ENCODE measurements at regions of chr9 and their contacts with region 1.

Region 1: DNA sequence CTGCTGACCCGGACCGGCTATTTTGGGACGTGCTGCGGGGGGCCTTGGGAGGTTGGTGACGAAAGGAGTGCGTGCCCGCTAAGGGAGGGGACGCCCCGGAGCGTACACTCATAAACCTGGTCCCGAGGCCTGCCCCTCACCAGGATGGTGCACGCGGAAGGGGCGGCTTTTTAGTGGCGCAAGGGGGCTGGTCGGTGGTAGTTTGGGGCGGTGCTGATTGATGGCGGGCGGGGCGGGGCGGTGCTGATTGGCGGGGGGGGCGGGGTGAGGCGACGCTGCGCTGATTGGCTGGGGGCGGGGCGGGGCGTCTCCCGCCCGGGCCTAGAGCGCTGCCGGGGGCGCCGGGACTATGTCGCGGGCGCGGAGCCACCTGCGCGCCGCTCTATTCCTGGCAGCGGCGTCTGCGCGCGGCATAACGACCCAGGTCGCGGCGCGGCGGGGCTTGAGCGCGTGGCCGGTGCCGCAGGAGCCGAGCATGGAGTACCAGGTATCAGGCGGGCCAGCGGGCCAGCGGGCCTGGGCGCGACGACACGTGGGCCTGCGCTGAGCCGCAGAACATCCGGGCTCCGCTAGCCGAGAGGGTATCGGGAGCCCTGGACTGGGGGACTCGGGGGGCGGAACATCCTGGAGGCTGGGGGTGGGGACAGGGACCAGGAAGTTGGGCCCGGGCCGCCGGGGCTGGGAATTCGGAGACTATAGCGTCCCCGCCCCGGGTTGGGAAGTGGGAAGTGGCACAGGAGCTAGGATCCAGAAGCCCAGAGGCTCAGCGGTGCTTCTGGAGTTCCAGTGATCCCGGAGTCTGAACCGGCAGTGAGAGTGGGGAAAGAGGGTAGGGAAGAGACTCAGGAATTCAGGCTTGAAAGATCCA is at the start of gene FPGS:
- DNase-seq: peak; percentile 90
- H3K4me3 ChIP-seq: peak within 1 kb of the TSS; percentile 53
- H3K27ac ChIP-seq: peak within 1 kb of the TSS; percentile 87
- H3K4me1 ChIP-seq: peaks cover 10% of the 10 kb centered on the region
- H3K27me3 ChIP-seq: no peaks in the 10 kb centered on the region
- CTCF ChIP-seq: no peak
- total RNA-seq, gene FPGS: 31.6 to 55.1 TPM

Region 2: DNA sequence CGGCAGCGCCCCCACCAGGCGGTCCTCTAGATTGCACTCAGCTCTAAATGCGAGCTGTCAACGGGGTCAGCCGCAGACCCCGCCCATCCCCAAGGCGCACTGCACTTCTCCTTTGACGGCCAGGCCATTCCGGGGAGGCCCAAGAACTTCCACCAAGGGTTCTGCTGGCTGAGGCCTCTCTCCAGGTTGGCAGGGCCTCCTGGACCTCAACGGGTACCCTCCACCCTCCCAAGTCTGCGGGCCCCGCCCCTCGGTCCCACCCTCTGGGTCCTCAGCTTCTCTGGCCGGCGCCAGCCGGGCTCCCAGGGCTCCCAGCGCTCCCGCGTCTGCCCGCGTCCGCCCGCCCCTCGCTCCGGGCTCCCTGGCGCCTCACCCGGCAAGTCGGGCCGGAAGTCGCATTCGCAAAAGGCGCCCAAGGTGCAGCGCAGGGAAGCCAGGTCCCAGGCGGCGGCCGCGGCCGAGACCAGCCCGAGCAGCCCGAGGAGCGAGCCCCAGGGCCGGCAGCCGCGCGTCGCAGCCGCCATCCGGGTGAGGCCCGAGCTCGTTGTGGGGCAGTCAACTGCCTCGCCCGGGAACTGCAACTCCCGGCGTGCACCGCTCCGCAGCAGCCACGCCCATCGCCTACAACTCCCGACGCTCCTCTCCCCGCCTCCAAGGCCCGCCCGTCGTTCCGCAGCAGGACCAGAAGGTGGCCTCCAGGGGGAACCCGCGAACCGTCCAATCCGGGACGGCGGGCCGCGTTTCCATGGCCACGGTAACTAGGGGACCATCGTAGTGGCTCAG is 67.9 kb before region 1 on chr9 and contains the start of gene TOR2A:
- intact Hi-C with region 1: no loop called
- DNase-seq: peak; percentile 98
- H3K4me3 ChIP-seq: peak within 1 kb of the TSS; percentile 88
- H3K27ac ChIP-seq: peak within 1 kb of the TSS; percentile 97
- H3K4me1 ChIP-seq: peaks cover 7% of the 10 kb centered on the region
- H3K27me3 ChIP-seq: no peaks in the 10 kb centered on the region
- CTCF ChIP-seq: peak; percentile 94
- total RNA-seq, gene TOR2A: 25.8 to 29.8 TPM

Region 3: GRCh38 chr9:127869310-127870152 is 66.7 kb after region 1 on chr9:
- intact Hi-C with region 1: loop called (anchors 10 kb)
- DNase-seq: peak; percentile 94
- H3K4me3 ChIP-seq: no peak overlapping the region
- H3K27ac ChIP-seq: no peak overlapping the region
- H3K4me1 ChIP-seq: peaks cover 7% of the 10 kb centered on the region
- H3K27me3 ChIP-seq: no peaks in the 10 kb centered on the region
- CTCF ChIP-seq: peak; percentile 81

Region 4: DNA sequence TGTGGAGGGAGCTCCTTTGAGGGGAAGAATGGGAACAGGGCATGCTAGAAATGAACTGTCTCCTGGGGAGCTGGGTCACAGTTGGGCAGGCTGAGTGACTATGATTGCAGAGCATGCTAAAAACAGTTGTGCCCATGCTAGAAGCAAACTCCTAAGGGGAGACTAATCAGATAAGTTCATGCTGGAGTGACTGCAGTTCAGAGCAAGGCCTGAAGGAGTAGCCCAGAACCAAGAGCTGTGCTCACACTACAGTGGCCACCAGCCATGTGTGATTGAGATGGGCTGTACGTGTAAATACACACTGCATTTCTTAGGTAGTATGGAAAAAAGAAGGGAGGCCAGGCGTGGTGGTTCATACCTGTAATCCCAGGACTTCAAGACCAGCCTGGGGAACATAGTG is 85.0 kb after region 1 on chr9:
- intact Hi-C with region 1: no loop called
- DNase-seq: no peak
- H3K4me3 ChIP-seq: no peak overlapping the region
- H3K27ac ChIP-seq: no peak overlapping the region
- H3K4me1 ChIP-seq: no peaks in the 10 kb centered on the region
- H3K27me3 ChIP-seq: no peaks in the 10 kb centered on the region
- CTCF ChIP-seq: no peak